ENCODE measurements at regions of chr5 and their contacts with region 1.

Region 1: GRCh38 chr5:140346348-140347101 is at the start of gene HBEGF:
- DNase-seq: peak; percentile 83 to 95 (median 94)
- ATAC-seq: peak; percentile 90 to 91
- H3K4me3 ChIP-seq: peak within 1 kb of the TSS; percentile 80
- H3K27ac ChIP-seq: peak within 1 kb of the TSS; percentile 94
- H3K4me1 ChIP-seq: peaks cover 19% of the 10 kb centered on the region
- H3K27me3 ChIP-seq: no peaks in the 10 kb centered on the region
- total RNA-seq, gene HBEGF: 17.6 to 26.8 (median 19.5) TPM

Region 2: DNA sequence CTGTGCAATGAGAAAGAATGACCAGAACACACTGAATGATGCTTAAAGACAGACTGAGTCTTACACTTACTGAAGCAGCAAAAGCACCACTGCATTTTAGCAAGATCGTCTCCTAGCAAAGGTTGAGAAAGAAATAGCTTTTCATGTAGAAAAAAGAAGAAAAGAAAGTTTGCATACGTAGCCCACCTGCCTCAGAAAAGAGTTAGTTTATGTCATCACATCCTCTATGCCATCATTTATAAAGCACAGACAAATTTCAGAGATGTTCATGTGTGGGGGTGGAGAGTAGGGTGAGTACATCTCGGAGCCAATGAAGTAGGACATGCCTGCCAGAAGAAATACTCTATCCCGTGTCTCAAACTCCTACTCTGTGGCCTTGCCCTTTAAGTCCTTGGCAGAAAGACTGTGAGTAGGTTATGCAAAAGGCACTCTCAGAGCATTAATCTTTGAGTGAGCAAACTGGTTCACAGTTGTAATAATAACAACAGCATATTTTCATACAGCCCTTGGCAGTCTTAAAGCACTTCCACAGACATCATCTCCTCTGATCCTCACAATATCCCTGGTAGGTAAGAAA is 325.8 kb before region 1 on chr5:
- intact Hi-C with region 1: no loop called
- DNase-seq: no peak
- ATAC-seq: peak; percentile 56 to 59
- H3K4me3 ChIP-seq: no peak overlapping the region
- H3K27ac ChIP-seq: no peak overlapping the region
- H3K4me1 ChIP-seq: peaks cover 11% of the 10 kb centered on the region
- H3K27me3 ChIP-seq: no peaks in the 10 kb centered on the region

Region 3: GRCh38 chr5:140174465-140175366 is 171.8 kb before region 1 on chr5 and contains the start of gene CYSTM1:
- intact Hi-C with region 1: loop called in 2 of 4 experiments (anchors 5 to 10 kb)
- DNase-seq: peak; percentile 97 to 99 (median 98)
- ATAC-seq: peak; percentile 95 to 96
- H3K4me3 ChIP-seq: peak within 1 kb of the TSS; percentile 67
- H3K27ac ChIP-seq: peak within 1 kb of the TSS; percentile 86
- H3K4me1 ChIP-seq: peaks cover 5% of the 10 kb centered on the region
- H3K27me3 ChIP-seq: no peaks in the 10 kb centered on the region
- total RNA-seq, gene CYSTM1: 47.8 to 58.3 (median 51.1) TPM

Region 4: GRCh38 chr5:140244525-140245025 is 102.0 kb before region 1 on chr5:
- intact Hi-C with region 1: loop called (anchors 2 to 5 kb)
- DNase-seq: peak; percentile 93 to 97 (median 96)
- ATAC-seq: peak; percentile 49 to 60
- H3K4me3 ChIP-seq: no peak overlapping the region
- H3K27ac ChIP-seq: peak overlapping the region; percentile 18
- H3K4me1 ChIP-seq: peaks cover 22% of the 10 kb centered on the region
- H3K27me3 ChIP-seq: no peaks in the 10 kb centered on the region

Region 5: GRCh38 chr5:140261403-140262171 is 84.9 kb before region 1 on chr5:
- intact Hi-C with region 1: loop called in 1 of 4 experiments (anchors 5 kb)
- DNase-seq: peak; percentile 74 to 86 (median 75)
- ATAC-seq: peak; percentile 97 to 98
- H3K4me3 ChIP-seq: peak overlapping the region; percentile 33
- H3K27ac ChIP-seq: peak overlapping the region; percentile 88
- H3K4me1 ChIP-seq: peaks cover 5% of the 10 kb centered on the region
- H3K27me3 ChIP-seq: no peaks in the 10 kb centered on the region

Region 6: GRCh38 chr5:140302786-140303639 is 43.5 kb before region 1 on chr5 and contains the start of gene PFDN1:
- intact Hi-C with region 1: loop called in 1 of 4 experiments (anchors 5 kb)
- DNase-seq: peak; percentile 96 to 97 (median 96)
- ATAC-seq: peak; percentile 98
- H3K4me3 ChIP-seq: peak within 1 kb of the TSS; percentile 100
- H3K27ac ChIP-seq: peak within 1 kb of the TSS; percentile 99
- H3K4me1 ChIP-seq: peaks cover 2% of the 10 kb centered on the region
- H3K27me3 ChIP-seq: no peaks in the 10 kb centered on the region
- total RNA-seq, gene PFDN1: 57.6 to 71.9 (median 63.6) TPM

Measured in right cardiac atrium (tissue), 5 donors.